A549 (cell line): ENCODE measurements at regions of chr1 and their contacts with region 1.

Region 1: GRCh38 chr1:45490626-45491486 is at the start of gene TESK2:
- DNase-seq: peak; percentile 93 to 99
- ATAC-seq: peak; percentile 92 to 97
- H3K4me3 ChIP-seq: peak within 1 kb of the TSS; percentile 57
- H3K27ac ChIP-seq: peak within 1 kb of the TSS; percentile 18 to 68; a peak in 4 of 6 replicates
- H3K4me1 ChIP-seq: no peaks in the 10 kb centered on the region; the same call in 2 of the 3 replicates
- CTCF ChIP-seq: no peak
- EP300 ChIP-seq: no peak
- POLR2A ChIP-seq: no peak
- RAD21 ChIP-seq: no peak
- polyA plus RNA-seq, gene TESK2: 0.48 and 0.58 TPM in 2 replicates

Region 2: DNA sequence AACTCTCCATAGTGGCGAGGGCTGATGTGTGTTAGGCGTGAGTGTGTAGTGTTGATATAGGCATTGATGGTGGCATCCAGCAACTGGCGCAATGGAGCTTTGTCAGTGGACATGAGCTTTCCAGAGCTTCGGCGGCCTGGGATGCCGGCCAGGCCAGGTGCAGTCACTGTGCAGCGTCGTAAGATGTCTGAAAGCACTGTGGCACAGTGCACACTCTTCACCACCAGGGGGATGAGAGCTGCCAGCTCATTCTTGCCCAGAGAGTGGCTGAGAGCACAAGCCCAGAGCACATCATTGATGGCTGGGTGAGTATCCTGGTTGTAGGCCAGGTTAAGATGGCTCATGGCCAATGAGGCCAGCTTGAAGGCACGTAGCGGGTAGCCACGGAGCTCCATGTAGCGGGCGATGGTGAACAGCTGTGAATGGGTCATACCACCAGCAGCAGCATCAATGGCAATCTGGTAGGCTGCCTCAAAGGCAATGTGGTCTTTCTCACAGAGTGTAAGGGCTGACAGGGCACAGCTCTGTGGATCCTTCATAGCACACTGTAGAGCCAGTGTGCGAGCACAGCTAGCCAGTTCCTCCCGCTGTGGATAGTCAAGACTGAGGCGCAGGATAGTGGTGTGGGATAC is 472.1 kb before region 1 on chr1:
- CTCF ChIA-PET with region 1: interaction called, 56 read pairs
- POLR2A ChIA-PET with region 1: no interaction called
- DNase-seq: peak; percentile 24 to 62
- ATAC-seq: peak; percentile 89 to 96
- H3K4me3 ChIP-seq: no peak overlapping the region
- H3K27ac ChIP-seq: no peak overlapping the region
- H3K4me1 ChIP-seq: no peaks in the 10 kb centered on the region
- CTCF ChIP-seq: peak; percentile 55
- EP300 ChIP-seq: no peak
- POLR2A ChIP-seq: no peak
- RAD21 ChIP-seq: peak; percentile 63 to 68

Region 3: GRCh38 chr1:45348716-45349677 is 141.9 kb before region 1 on chr1:
- CTCF ChIA-PET with region 1: interaction called, 25 read pairs
- POLR2A ChIA-PET with region 1: no interaction called
- DNase-seq: no peak
- ATAC-seq: peak in 1 of 2 experiments; percentile 13; a peak in 3 of 6 replicates
- H3K4me3 ChIP-seq: no peak overlapping the region
- H3K27ac ChIP-seq: no peak overlapping the region
- H3K4me1 ChIP-seq: peaks cover 8% of the 10 kb centered on the region; the same call in 1 of the 3 replicates
- CTCF ChIP-seq: no peak
- EP300 ChIP-seq: no peak
- POLR2A ChIP-seq: no peak
- RAD21 ChIP-seq: no peak

Region 4: DNA sequence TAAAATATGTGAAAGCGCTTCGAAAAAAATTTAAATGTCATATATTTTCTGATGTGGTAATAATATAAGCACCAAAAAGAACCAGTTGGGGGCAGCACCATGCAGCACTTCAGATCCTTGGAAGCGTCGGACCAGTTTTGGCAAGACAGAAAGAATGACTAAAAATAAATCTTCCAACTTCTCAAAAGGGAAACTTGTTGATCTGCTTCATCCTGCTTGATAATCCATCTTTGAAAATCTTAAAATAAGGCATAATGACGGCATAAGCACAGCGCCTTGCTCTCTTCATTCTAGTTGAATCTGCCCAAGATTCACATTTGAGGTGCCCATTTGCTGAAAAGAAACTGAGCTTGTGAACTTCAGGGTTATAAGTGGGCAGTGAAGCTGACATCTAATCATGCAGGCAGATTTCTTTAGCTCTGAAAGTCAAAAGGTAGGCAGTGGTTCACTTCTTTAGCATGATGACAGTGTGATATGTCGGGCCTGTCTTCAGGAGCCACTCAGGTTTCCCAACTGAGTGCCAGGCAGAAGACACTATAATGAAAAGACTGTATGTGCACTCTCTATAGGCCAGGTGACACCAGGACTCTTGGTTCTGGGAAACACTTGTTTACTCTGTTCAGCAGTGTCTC is 130.9 kb before region 1 on chr1:
- CTCF ChIA-PET with region 1: interaction called, 157 read pairs
- POLR2A ChIA-PET with region 1: no interaction called
- DNase-seq: peak in 1 of 2 experiments; percentile 48
- ATAC-seq: peak; percentile 66 to 75; a peak in 4 of 6 replicates
- H3K4me3 ChIP-seq: no peak overlapping the region
- H3K27ac ChIP-seq: no peak overlapping the region
- H3K4me1 ChIP-seq: no peaks in the 10 kb centered on the region
- CTCF ChIP-seq: peak; percentile 77
- EP300 ChIP-seq: no peak
- POLR2A ChIP-seq: no peak
- RAD21 ChIP-seq: peak; percentile 80

Region 5: DNA sequence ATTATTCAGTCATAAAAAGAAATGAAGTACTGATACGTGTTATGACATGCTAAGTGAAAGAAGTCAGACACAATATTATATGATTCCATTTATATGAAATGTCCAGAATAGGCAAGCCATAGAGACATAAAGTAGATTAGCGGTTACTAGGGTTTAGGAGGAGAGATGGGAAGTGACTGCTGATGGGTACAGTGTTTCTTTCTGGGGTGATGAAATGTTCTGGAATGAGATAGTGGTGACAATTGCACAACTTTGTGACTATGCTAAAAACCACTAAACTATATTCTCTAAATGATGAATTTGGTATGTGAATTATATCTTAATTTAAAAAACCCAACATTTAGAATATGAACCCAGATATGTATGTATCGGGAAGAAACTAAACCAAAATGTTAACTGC is 232.0 kb after region 1 on chr1:
- CTCF ChIA-PET with region 1: no interaction called
- POLR2A ChIA-PET with region 1: no interaction called
- DNase-seq: no peak
- ATAC-seq: no peak
- H3K4me3 ChIP-seq: no peak overlapping the region
- H3K27ac ChIP-seq: no peak overlapping the region
- H3K4me1 ChIP-seq: no peaks in the 10 kb centered on the region; the same call in 2 of the 3 replicates
- CTCF ChIP-seq: no peak
- EP300 ChIP-seq: no peak
- POLR2A ChIP-seq: no peak
- RAD21 ChIP-seq: no peak